ENCODE measurements at regions of chr6 and their contacts with region 1.

Region 1: GRCh38 chr6:29847871-29848630 is 20.4 kb downstream of the HLA-G start:
- DNase-seq: peak; percentile 90
- H3K4me3 Mint-ChIP-seq: no peak overlapping the region
- H3K27ac Mint-ChIP-seq: no peak overlapping the region
- H3K4me1 Mint-ChIP-seq: peaks cover 25% of the 10 kb centered on the region
- H3K27me3 Mint-ChIP-seq: peaks cover 38% of the 10 kb centered on the region

Region 2: DNA sequence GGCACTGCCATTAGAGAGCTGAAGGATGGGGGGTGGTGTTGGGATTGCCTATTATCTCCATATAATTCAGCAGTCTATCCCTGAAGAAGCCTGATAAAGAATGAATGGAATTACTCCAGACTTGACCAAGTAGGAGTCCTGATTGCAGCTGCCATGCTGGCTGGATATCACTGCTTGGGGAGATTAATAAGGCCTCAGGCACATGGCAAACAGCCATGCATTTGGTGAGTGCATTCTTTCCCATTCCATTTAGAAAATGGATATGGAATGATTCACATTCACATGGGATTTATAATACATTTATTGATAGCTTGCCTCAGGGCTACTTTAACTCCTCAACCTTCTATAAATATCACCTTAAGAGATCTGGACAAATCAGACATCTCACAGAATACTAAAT is 44.6 kb after region 1 on chr6:
- CTCF ChIA-PET with region 1: no interaction called
- intact Hi-C with region 1: no loop called
- DNase-seq: no peak
- H3K4me3 Mint-ChIP-seq: no peak overlapping the region
- H3K27ac Mint-ChIP-seq: no peak overlapping the region
- H3K4me1 Mint-ChIP-seq: peaks cover 9% of the 10 kb centered on the region
- H3K27me3 Mint-ChIP-seq: no peaks in the 10 kb centered on the region

Region 3: GRCh38 chr6:29926413-29927274 is 78.6 kb after region 1 on chr6:
- CTCF ChIA-PET with region 1: no interaction called
- intact Hi-C with region 1: loop called (anchors 5 kb)
- DNase-seq: peak; percentile 90
- H3K4me3 Mint-ChIP-seq: peak overlapping the region; percentile 96
- H3K27ac Mint-ChIP-seq: peak overlapping the region; percentile 94
- H3K4me1 Mint-ChIP-seq: peaks cover 31% of the 10 kb centered on the region
- H3K27me3 Mint-ChIP-seq: no peaks in the 10 kb centered on the region

Region 4: GRCh38 chr6:29964887-29965562 is 117.0 kb after region 1 on chr6:
- CTCF ChIA-PET with region 1: interaction called, 45 read pairs
- intact Hi-C with region 1: loop called (anchors 1 kb)
- DNase-seq: peak; percentile 91
- H3K4me3 Mint-ChIP-seq: peak overlapping the region; percentile 86
- H3K27ac Mint-ChIP-seq: peak overlapping the region; percentile 98
- H3K4me1 Mint-ChIP-seq: peaks cover 41% of the 10 kb centered on the region
- H3K27me3 Mint-ChIP-seq: no peaks in the 10 kb centered on the region

Region 5: DNA sequence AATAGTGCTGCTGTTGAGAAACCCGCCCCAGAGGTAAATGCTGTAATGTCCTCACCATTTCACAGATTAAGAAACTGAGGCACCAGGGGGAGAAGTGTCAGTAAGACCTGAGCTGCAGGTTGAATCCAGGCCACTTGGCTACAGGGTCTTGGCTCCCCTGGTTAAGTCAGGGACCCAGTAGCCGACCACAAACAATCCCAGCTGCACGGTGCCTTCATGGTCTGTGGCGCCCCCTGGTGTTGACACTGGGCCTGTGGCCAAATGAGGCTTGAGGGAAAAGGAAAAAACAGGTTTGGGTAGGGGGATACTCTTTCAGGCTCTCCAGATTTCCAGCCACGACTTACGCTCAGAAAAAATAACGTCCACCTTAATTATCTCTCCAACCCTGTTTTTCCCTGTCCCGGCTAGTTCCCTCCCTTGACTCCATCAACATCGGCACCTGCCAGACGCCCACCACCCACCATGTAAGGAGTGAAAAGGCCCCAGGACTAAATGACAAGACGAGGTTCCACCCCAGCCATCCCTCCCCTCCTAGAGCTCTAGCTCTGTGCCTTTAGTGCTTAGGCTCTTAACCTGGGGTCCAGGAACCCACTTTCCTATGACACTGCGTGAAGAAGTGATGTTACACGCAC is 165.4 kb after region 1 on chr6:
- CTCF ChIA-PET with region 1: interaction called, 20 read pairs
- intact Hi-C with region 1: loop called (anchors 1 kb)
- DNase-seq: peak; percentile 62
- H3K4me3 Mint-ChIP-seq: no peak overlapping the region
- H3K27ac Mint-ChIP-seq: no peak overlapping the region
- H3K4me1 Mint-ChIP-seq: no peaks in the 10 kb centered on the region
- H3K27me3 Mint-ChIP-seq: peaks cover 6% of the 10 kb centered on the region

Region 6: DNA sequence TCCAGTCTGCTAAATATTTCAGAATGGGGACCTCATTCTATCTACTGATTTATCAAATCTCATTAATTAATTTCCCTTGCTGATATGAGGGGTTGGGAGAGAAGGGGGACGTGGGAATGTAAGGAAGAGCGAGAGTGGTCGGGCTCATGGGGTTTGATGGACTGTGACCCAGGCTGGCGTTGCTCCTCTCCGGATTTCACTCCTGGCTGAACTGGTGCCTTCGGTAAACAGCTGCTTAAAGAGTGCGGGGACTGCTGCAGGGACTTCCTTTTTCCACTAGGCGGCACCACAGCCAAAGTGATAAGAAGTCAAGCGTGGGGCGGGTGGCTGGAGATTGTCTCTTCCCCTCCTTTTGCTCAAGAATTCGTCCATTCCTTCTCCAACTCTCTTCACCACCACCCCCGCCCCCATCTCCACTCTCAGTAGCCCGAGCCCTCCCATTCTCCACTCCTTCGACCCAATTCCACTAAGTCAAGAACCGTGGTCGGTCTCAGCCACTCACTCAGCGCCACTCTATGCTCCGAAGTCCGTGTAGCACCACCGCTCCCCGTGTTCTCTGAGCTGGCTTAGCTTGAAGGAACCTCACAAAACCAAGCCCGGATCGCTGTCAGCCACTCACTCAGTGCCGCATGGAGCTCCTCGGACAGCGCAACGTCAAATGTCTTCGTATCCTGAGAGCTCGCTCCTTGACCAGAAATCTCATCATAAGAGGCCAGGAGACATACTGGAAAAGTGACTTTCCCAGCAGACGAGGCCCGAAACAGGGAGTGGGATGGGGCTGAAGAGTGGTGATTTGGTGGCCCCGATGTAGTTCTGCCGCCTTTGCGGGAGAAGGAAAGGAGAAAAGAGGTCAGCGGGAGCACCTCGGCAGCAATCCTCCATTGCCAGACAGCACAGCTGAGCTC is 255.2 kb after region 1 on chr6:
- CTCF ChIA-PET with region 1: interaction called, 4 read pairs
- intact Hi-C with region 1: loop called (anchors 1 kb)
- DNase-seq: peak; percentile 93
- H3K4me3 Mint-ChIP-seq: peak overlapping the region; percentile 78
- H3K27ac Mint-ChIP-seq: no peak overlapping the region
- H3K4me1 Mint-ChIP-seq: peaks cover 45% of the 10 kb centered on the region
- H3K27me3 Mint-ChIP-seq: peaks cover 26% of the 10 kb centered on the region

Region 7: GRCh38 chr6:30169658-30170614 is 321.9 kb after region 1 on chr6:
- CTCF ChIA-PET with region 1: no interaction called
- intact Hi-C with region 1: loop called (anchors 1 kb)
- DNase-seq: peak; percentile 26
- H3K4me3 Mint-ChIP-seq: no peak overlapping the region
- H3K27ac Mint-ChIP-seq: no peak overlapping the region
- H3K4me1 Mint-ChIP-seq: peaks cover 21% of the 10 kb centered on the region
- H3K27me3 Mint-ChIP-seq: peaks cover 43% of the 10 kb centered on the region

Measured in activated naive CD4-positive, alpha-beta T cell treated with anti-CD3 and anti-CD28 coated beads for 36 hours (primary cell).